Prostate gland (tissue), 2 donors: ENCODE measurements at regions of chr10 and their contacts with region 1.

Region 1: GRCh38 chr10:102917962-102918816 is at the start of gene CNNM2:
- DNase-seq: peak; percentile 100
- H3K4me3 ChIP-seq: peak within 1 kb of the TSS; percentile 69 to 96
- H3K27ac ChIP-seq: peak within 1 kb of the TSS; percentile 95 to 96
- H3K4me1 ChIP-seq: peaks cover 8% of the 10 kb centered on the region
- H3K27me3 ChIP-seq: no peaks in the 10 kb centered on the region
- CTCF ChIP-seq: peak in 1 of 4 experiments; percentile 51
- POLR2A ChIP-seq: no peak
- total RNA-seq, gene CNNM2: 13.4 to 18.9 TPM

Region 2: DNA sequence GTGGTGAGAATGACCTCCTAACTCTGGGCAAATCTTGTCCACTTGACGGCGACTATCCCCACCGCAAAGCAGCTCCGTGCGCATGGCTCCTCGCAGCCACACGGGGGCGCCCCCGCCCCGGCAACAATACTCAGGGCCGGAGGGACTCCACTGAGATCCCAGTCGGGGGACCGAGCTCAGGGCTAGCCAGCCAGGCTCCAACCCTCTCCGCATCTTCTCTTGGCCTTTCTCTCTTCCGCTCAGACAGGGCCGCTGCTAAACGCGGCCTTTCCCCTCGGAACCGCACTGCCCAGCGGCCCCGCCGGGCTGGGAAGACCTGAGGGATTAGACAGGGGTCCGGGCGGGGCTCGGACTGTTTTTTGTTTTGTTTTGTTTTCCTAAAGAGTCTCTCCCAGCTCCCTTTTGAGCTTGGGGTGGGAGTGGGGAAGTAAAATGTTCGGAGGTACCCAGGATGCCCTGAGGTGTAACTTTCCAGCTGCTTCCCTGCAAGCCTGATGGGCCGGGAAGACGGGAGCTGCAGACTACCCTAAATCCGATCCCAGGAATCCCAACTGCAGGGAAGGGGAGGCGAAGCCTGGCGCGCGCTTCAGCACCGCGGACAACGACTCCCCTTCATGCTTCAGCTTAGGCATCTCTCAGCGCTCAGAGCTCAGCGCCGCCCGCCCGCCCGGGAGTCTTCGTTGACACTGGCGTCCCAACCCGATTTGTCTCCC is 1077.3 kb before region 1 on chr10:
- intact Hi-C with region 1: no loop called
- DNase-seq: peak; percentile 55
- H3K4me3 ChIP-seq: no peak overlapping the region
- H3K27ac ChIP-seq: no peak overlapping the region
- H3K4me1 ChIP-seq: no peaks in the 10 kb centered on the region
- H3K27me3 ChIP-seq: no peaks in the 10 kb centered on the region
- CTCF ChIP-seq: peak; percentile 50 to 82 (median 70)
- POLR2A ChIP-seq: no peak

Region 3: DNA sequence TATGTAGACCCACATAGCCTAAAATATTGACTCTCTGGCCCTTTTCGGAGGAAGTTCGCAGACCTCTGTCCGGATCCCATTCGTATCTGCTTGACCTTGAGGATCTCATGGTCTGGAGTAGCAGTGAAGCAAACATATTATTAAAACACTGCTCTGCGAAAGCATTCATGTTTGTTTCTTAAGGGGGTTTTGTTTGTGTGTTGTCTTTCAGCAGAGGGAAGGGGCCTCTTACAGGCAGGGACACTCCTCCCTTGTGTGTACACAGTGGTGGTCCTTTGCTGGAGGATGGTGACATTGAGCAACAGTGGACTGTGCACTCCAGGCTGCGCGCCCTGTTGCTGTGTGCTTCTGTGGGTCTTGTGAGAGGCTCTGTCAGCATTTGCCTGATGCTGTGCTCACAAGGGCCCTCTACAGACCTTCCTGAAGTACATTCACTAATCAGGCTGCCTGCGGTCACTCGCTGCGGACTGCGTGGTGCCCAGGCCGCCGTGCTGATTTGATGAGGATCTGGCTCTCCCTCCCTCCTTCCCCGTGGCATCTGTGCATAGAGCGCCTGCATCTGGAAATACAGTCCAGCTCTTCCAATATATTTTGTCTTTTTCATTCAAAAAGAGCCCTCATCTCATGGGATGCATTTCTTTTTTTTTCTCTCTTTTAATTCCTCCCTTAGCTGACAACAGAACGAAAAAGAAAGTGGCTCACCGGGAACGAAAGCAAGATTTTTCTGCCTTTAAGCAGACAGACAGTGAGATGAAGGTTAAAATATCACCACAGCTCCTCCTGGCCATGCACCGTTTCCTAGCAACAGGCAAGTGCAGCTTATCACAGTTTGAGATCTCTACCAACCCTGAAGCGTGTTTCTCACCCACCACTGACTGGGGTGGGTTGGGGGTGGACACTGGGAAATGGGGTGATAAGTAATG is 135.7 kb after region 1 on chr10:
- intact Hi-C with region 1: loop called (anchors 5 kb)
- DNase-seq: peak; percentile 43
- H3K4me3 ChIP-seq: peak overlapping the region; percentile 3 to 8
- H3K27ac ChIP-seq: no peak overlapping the region
- H3K4me1 ChIP-seq: no peaks in the 10 kb centered on the region
- H3K27me3 ChIP-seq: no peaks in the 10 kb centered on the region
- CTCF ChIP-seq: peak in 2 of 4 experiments; percentile 33 to 45
- POLR2A ChIP-seq: no peak

Region 4: DNA sequence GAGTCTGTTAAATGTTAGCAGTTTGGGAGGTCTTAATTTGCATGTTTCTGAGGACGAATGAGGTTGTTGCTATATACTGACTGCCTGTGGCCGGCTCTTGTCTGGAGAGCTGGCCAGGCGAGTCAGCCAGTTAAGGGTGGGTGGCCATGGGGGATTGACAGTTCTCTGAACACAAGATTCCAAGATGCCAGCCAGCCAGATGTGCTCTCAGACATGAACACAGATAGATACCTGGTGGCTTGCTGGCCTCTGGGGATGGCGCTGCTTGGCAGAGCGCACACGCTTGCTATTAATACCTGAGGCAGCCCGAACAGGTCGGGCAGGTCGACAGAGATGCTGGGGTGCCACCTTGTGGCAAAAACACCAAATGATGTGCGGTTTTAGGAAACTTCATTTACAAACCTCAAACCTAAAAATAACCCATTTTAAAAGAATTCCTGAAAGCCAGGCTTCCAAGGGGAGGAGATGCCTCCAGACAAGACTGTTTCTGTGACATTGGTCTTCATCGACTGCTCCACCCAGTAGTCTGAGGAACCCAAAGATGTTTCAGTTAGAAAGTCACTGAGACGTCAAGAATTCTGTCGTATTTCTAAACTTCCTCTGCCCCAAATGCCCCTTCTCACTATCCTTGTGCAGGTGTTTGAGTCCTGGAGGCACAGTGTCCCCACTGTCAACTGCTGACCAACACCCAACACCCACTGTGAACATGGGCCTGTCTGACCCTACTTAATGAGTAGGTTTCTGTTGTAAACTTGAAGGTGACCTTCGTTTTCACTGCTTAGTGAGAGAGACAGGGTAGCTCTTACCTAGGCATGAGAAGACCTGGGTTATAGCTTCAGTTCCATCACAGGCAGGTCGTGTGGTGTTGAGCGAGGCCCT is 151.5 kb after region 1 on chr10:
- intact Hi-C with region 1: loop called (anchors 2 kb)
- DNase-seq: peak; percentile 73
- H3K4me3 ChIP-seq: no peak overlapping the region
- H3K27ac ChIP-seq: no peak overlapping the region
- H3K4me1 ChIP-seq: no peaks in the 10 kb centered on the region
- H3K27me3 ChIP-seq: no peaks in the 10 kb centered on the region
- CTCF ChIP-seq: peak; percentile 38 to 90 (median 87)
- POLR2A ChIP-seq: no peak

Region 5: GRCh38 chr10:103192451-103193106 is 274.4 kb after region 1 on chr10:
- intact Hi-C with region 1: loop called (anchors 2 kb)
- DNase-seq: peak; percentile 58
- H3K4me3 ChIP-seq: peak overlapping the region; percentile 99
- H3K27ac ChIP-seq: peak overlapping the region; percentile 96 to 97
- H3K4me1 ChIP-seq: no peaks in the 10 kb centered on the region
- H3K27me3 ChIP-seq: no peaks in the 10 kb centered on the region
- CTCF ChIP-seq: peak in 1 of 4 experiments; percentile 1
- POLR2A ChIP-seq: peak; percentile 21